IMR-90 (cell line): ENCODE measurements at regions of chr3 and their contacts with region 1.

Region 1: GRCh38 chr3:42600111-42600988 is at the start of gene NKTR:
- DNase-seq: peak; percentile 97
- ATAC-seq: peak; percentile 94
- H3K4me3 ChIP-seq: peak within 1 kb of the TSS; percentile 64
- H3K27ac ChIP-seq: peak within 1 kb of the TSS; percentile 85
- H3K4me1 ChIP-seq: 0 out of 2 replicates have a peak, but pooled peaks cover 3% of the 10 kb centered on the region
- H3K27me3 ChIP-seq: no peaks in the 10 kb centered on the region
- CTCF ChIP-seq: no peak
- POLR2A ChIP-seq: peak; percentile 85
- RAD21 ChIP-seq: no peak
- total RNA-seq, gene NKTR: 24.0 and 51.4 TPM in 2 replicates

Region 2: DNA sequence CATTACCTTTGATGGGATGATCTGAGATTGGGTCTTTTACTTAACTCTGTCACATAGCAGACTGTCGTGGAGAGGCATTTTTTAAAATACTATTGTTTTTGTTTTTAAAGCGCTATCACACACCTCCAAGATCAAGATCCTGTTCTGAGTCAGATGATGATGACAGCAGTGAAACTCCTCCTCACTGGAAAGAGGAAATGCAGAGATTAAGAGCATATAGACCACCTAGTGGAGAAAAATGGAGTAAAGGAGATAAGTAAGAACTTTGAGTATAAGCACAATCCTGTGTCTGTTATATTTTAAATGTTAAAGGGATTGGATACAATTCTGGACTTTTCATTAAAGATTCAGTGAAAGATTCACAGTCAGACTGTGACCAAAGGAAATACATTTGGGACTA is 34.8 kb after region 1 on chr3:
- CTCF ChIA-PET with region 1: no interaction called
- POLR2A ChIA-PET with region 1: no interaction called
- dilution Hi-C with region 1: no loop called
- in situ Hi-C with region 1: no loop called
- intact Hi-C with region 1: loop called (anchors 5 kb)
- DNase-seq: peak; percentile 60
- ATAC-seq: peak; percentile 56; the same call in 1 of the 2 replicates
- H3K4me3 ChIP-seq: no peak overlapping the region
- H3K27ac ChIP-seq: no peak overlapping the region
- H3K4me1 ChIP-seq: peaks cover 8% of the 10 kb centered on the region
- H3K27me3 ChIP-seq: no peaks in the 10 kb centered on the region
- CTCF ChIP-seq: peak; percentile 30; the same call in 1 of the 2 replicates
- POLR2A ChIP-seq: no peak
- RAD21 ChIP-seq: peak; percentile 36

Region 3: GRCh38 chr3:43207628-43208085 is 607.3 kb after region 1 on chr3:
- CTCF ChIA-PET with region 1: no interaction called
- POLR2A ChIA-PET with region 1: no interaction called
- dilution Hi-C with region 1: no loop called
- in situ Hi-C with region 1: no loop called
- intact Hi-C with region 1: no loop called
- DNase-seq: peak; percentile 23
- ATAC-seq: no peak
- H3K4me3 ChIP-seq: no peak overlapping the region
- H3K27ac ChIP-seq: no peak overlapping the region
- H3K4me1 ChIP-seq: peaks cover 2% of the 10 kb centered on the region; the same call in 1 of the 2 replicates
- H3K27me3 ChIP-seq: no peaks in the 10 kb centered on the region
- CTCF ChIP-seq: no peak
- POLR2A ChIP-seq: no peak
- RAD21 ChIP-seq: no peak